ENCODE measurements at regions of chr1 and their contacts with region 1.

Region 1: GRCh38 chr1:91885716-91886506 is at the start of gene TGFBR3:
- DNase-seq: no peak
- H3K4me3 ChIP-seq: peak within 1 kb of the TSS; percentile 76
- CTCF ChIP-seq: peak; percentile 82

Region 2: GRCh38 chr1:91529856-91530255 is 356.1 kb before region 1 on chr1:
- CTCF ChIA-PET with region 1: interaction called, 41 read pairs
- POLR2A ChIA-PET with region 1: interaction called, 3 read pairs
- DNase-seq: no peak
- H3K4me3 ChIP-seq: no peak overlapping the region
- CTCF ChIP-seq: peak; percentile 25

Region 3: DNA sequence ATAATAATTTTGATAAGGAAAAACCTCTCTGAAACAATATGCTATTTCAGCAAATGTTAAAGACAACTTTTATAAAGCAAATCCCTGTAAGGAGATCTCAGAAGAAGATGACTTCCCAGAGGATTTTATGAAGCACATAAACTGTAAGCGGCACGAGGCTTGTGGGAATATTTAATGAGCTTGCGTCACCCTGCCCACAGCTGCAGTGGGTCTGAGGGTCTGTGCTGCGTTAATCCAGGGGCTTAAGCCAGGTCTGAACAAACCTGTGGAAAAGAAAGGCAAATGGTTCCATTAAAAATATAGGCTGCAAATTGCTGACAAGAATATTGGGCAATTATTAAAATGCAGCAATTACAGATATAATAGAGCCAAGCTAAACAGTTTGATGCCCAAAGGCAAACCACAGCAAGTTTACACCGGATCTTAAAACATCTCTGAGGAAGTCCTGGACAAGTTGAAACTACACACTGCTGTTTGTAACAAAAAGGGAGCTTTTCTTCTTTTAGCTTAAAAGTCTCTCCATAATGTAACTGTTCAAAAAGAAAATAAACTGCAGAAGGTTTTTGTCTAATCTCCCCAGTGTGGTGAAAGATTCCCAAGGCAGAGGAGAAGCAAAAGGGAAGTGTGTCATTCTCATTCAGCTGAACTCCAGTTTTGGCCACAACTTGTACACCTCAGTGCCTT is 21.8 kb before region 1 on chr1:
- CTCF ChIA-PET with region 1: interaction called, 81 read pairs
- POLR2A ChIA-PET with region 1: interaction called, 4 read pairs
- DNase-seq: no peak
- H3K4me3 ChIP-seq: peak overlapping the region; percentile 3
- CTCF ChIP-seq: no peak

Region 4: GRCh38 chr1:91872560-91873081 is 13.3 kb before region 1 on chr1:
- CTCF ChIA-PET with region 1: interaction called, 81 read pairs
- POLR2A ChIA-PET with region 1: interaction called, 3 read pairs
- DNase-seq: no peak
- H3K4me3 ChIP-seq: no peak overlapping the region
- CTCF ChIP-seq: no peak

Region 5: DNA sequence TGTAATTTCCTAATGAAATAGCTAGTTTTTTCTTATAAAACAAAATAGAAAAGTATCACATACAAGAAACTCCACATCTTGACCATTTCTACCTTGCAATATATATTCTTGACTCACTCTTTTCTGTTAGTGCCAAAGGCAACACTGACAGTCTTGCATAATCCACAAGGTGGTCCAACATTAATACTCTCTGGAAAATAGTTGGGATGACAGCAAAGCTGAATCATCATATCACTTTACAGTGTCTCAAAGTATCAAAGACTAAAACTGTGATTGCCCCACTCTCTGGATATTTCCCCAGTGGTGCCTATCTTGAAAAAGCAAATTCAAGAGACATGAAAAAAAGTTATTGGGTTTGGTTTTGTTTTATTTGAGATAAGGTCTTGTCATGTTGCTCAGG is 14.6 kb after region 1 on chr1:
- CTCF ChIA-PET with region 1: interaction called, 27 read pairs
- POLR2A ChIA-PET with region 1: interaction called, 3 read pairs
- DNase-seq: peak; percentile 77
- H3K4me3 ChIP-seq: no peak overlapping the region
- CTCF ChIP-seq: no peak

Region 6: DNA sequence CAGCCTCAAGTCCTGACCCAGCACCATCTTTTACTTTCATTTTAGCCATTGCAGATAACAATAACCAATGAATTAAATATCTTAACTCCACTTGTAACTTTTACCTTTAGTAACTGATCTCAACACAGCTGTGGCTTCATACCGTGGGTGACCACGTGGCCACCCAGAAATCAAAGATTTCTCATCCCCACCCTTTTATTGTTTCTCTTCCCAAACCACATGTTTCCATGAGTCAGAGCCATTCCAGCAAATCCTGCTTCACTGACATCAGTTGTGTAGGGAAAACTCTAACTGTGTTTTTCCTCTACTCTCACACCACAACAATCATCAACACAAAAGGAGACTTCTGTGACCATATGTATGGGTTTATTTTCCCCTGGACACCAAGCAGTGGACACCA is 38.2 kb after region 1 on chr1:
- CTCF ChIA-PET with region 1: interaction called, 34 read pairs
- POLR2A ChIA-PET with region 1: interaction called, 3 read pairs
- DNase-seq: peak; percentile 26
- H3K4me3 ChIP-seq: no peak overlapping the region
- CTCF ChIP-seq: no peak

Region 7: DNA sequence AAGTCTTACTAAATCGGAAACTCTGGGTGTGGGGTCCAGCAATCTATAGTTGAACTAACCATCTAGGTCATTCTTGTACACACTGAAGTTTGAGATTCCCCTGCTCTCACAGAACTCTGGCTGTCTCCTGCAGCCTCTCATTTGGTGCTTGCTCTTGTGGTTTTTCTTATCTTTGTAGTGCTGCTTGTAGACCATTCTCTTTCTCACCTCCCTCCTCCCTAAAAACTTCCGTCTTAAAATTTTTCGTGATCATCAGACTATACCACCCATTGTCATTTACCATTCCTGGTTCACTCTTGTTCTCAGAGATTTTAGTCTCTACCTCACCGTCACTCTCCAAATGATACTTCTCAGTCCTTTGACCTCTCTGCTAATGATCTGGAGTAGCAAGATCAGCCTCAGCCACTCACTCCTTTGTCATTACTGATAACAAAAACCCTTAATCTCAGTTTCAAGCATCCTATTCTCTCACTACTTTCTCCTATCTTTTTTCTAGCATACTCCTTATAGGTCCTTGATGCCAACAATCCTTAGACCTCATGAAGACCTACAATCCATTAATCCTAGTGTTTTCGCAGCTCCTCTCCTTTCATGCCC is 130.9 kb after region 1 on chr1:
- CTCF ChIA-PET with region 1: no interaction called
- POLR2A ChIA-PET with region 1: no interaction called
- DNase-seq: no peak
- H3K4me3 ChIP-seq: no peak overlapping the region
- CTCF ChIP-seq: no peak

Measured in AG04449 (cell line).